T-cell (primary cell): ENCODE measurements at regions of chr18 and their contacts with region 1.

Region 1: GRCh38 chr18:68469049-68469625 is 245.8 kb downstream of the TMX3 start:
- DNase-seq: no peak
- ATAC-seq: no peak
- H3K4me3 ChIP-seq: no peak overlapping the region
- H3K4me3 Mint-ChIP-seq: no peak overlapping the region
- H3K27ac ChIP-seq: no peak overlapping the region
- H3K27ac Mint-ChIP-seq: no peak overlapping the region
- H3K4me1 ChIP-seq: no peaks in the 10 kb centered on the region
- H3K4me1 Mint-ChIP-seq: peaks cover 2 to 6% (median 2%) of the 10 kb centered on the region in 3 donors
- H3K27me3 ChIP-seq: peaks cover 0 to 2% of the 10 kb centered on the region in 2 experiments
- H3K27me3 Mint-ChIP-seq: peaks cover 0 to 3% of the 10 kb centered on the region in 2 donors

Region 2: GRCh38 chr18:69205925-69206324 is 736.8 kb after region 1 on chr18:
- CTCF ChIA-PET with region 1: no interaction called
- POLR2A ChIA-PET with region 1: interaction called in 1 of 2 experiments, 11 read pairs
- DNase-seq: no peak
- ATAC-seq: no peak
- H3K4me3 ChIP-seq: no peak overlapping the region
- H3K4me3 Mint-ChIP-seq: no peak overlapping the region
- H3K27ac ChIP-seq: no peak overlapping the region
- H3K27ac Mint-ChIP-seq: no peak overlapping the region
- H3K4me1 ChIP-seq: no peaks in the 10 kb centered on the region
- H3K4me1 Mint-ChIP-seq: no peaks in the 10 kb centered on the region
- H3K27me3 ChIP-seq: no peaks in the 10 kb centered on the region
- H3K27me3 Mint-ChIP-seq: no peaks in the 10 kb centered on the region

Region 3: GRCh38 chr18:69780851-69781250 is 1311.7 kb after region 1 on chr18:
- CTCF ChIA-PET with region 1: no interaction called
- POLR2A ChIA-PET with region 1: interaction called in 1 of 2 experiments, 12 read pairs
- DNase-seq: no peak
- ATAC-seq: no peak
- H3K4me3 ChIP-seq: no peak overlapping the region
- H3K4me3 Mint-ChIP-seq: no peak overlapping the region
- H3K27ac ChIP-seq: no peak overlapping the region
- H3K27ac Mint-ChIP-seq: no peak overlapping the region
- H3K4me1 ChIP-seq: no peaks in the 10 kb centered on the region
- H3K4me1 Mint-ChIP-seq: no peaks in the 10 kb centered on the region
- H3K27me3 ChIP-seq: no peaks in the 10 kb centered on the region
- H3K27me3 Mint-ChIP-seq: no peaks in the 10 kb centered on the region